ENCODE measurements at regions of chr10 and their contacts with region 1.

Region 1: DNA sequence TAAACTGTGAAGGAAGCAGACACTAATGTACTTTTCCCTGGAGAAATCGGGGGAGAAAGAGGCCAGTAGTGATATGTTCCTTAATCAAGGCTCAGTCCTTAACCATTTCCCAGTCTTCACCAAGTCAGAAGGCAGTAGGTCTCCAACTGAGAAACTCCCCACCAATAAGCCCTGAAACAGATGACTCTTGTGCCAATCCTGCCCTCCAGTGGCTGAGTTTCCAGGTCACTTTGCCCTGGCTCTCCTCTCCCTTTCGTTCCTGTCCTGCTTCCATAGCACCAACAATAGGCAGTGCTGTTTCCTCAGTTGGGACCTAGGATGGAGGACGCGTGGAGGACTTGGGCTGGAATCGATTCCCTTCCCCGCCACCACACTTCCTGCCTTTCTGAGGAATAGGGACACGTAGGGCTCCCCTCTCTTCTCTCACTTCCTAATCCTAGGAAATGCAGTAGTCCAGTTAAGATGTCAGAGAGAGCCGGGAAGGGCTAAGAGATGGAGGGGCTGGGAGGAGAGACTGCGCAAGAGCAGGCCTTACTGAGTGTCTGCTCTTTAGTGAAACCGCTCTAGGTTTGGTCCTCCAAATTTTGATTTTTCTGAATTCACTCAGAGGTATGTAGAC is 23.4 kb downstream of the ATOH7 start:
- DNase-seq: peak; percentile 23
- H3K4me3 Mint-ChIP-seq: no peak overlapping the region
- H3K27ac Mint-ChIP-seq: no peak overlapping the region
- H3K4me1 Mint-ChIP-seq: peaks cover 1% of the 10 kb centered on the region
- H3K27me3 Mint-ChIP-seq: peaks cover 8% of the 10 kb centered on the region

Region 2: GRCh38 chr10:68223535-68224165 is 15.1 kb after region 1 on chr10:
- CTCF ChIA-PET with region 1: interaction called, 11 read pairs
- POLR2A ChIA-PET with region 1: no interaction called
- DNase-seq: no peak
- H3K4me3 Mint-ChIP-seq: no peak overlapping the region
- H3K27ac Mint-ChIP-seq: no peak overlapping the region
- H3K4me1 Mint-ChIP-seq: no peaks in the 10 kb centered on the region
- H3K27me3 Mint-ChIP-seq: peaks cover 13% of the 10 kb centered on the region

Region 3: DNA sequence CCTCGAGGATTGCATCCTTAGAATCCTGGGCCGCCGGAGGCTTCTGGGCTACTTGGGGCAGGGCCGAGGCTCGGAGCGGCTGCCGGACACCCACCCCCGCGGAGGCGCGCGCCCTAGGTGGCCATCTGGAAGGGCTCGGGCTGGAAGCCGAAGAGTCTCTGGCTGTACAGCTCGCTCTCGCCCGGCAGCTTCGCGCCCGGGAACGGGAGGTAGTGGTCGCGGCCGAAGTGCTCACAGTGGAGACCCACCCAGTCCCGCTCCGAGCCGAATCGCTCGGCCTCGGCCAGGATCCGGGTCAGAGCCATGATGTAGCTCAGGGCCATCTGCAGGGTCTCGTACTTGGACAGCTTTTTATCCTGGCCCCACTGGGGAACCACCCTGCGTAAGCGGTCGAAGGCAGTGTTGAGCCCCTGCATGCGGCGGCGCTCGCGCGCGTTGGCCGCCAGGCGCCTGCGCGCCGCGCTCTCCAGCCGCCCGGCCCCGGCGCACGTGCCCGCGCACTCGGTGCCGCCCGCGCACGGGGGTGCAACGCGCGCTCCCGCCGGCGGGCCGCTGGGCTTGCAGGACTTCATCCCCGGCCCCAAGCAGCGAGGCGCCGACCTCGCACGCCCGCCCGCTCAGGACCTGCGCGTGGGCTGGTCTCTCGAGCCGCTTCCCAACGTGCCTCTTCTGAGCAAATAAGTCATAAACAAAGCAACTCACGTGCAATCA is 22.7 kb after region 1 on chr10:
- CTCF ChIA-PET with region 1: interaction called, 11 read pairs
- POLR2A ChIA-PET with region 1: no interaction called
- DNase-seq: peak; percentile 28
- H3K4me3 Mint-ChIP-seq: peak overlapping the region; percentile 62
- H3K27ac Mint-ChIP-seq: no peak overlapping the region
- H3K4me1 Mint-ChIP-seq: peaks cover 9% of the 10 kb centered on the region
- H3K27me3 Mint-ChIP-seq: peaks cover 44% of the 10 kb centered on the region

Region 4: DNA sequence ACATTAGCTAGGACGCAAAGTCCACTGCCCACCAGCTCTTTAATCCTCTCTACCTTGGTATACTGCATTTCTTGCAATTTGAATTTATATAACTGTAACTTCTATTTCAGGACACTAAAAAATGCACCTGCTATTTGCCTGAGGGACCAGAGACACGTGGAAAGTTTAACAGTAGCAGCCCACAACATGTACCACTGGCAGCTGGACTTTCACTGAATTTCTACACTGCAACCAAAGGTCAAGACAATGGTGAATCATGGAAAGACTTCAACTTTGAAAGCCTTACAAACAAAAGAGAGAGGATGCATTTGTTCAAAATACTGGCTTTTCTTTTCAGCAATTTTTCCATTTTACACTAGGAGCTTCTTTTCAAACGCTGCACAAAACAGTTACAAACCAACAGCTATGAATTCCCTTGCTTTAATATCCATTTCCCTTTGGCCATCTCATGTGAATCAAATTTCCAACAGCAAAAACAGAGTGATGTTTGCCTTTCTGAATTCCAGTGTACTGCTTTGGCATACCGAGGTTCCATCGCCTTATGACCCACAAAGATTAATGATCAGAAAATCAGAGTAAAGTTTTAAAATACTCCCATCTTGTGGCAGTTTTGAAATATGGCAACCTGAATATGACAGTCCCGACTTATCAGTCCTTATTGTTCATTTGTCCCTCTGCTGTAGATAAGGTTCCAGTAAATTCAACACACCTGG is 93.4 kb after region 1 on chr10:
- CTCF ChIA-PET with region 1: interaction called, 44 read pairs
- POLR2A ChIA-PET with region 1: no interaction called
- DNase-seq: no peak
- H3K4me3 Mint-ChIP-seq: no peak overlapping the region
- H3K27ac Mint-ChIP-seq: no peak overlapping the region
- H3K4me1 Mint-ChIP-seq: no peaks in the 10 kb centered on the region
- H3K27me3 Mint-ChIP-seq: no peaks in the 10 kb centered on the region

Region 5: DNA sequence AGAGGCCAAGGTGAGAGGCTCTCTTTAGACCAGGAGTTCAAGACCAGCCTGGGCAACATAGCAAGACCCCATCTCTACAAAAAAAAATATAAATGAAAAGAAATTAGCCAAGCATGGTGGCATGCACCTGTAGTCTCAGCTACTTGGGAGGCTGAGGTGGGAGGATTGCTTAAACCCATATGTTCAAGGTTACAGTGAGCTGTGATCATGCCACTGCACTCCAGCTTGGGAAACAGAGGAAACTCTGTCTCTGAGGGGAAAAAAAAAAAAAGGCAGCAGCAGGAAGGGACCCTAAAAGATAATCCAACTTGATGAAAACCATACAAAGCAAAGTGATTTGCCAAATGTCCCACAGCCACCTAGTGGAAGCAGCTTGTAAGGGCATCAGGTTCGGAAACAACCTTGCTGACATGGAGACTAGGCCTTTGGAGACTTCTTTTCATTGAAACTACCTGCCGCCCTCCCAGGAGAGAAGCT is 139.8 kb after region 1 on chr10:
- CTCF ChIA-PET with region 1: interaction called, 22 read pairs
- POLR2A ChIA-PET with region 1: no interaction called
- DNase-seq: peak; percentile 51
- H3K4me3 Mint-ChIP-seq: no peak overlapping the region
- H3K27ac Mint-ChIP-seq: no peak overlapping the region
- H3K4me1 Mint-ChIP-seq: peaks cover 17% of the 10 kb centered on the region
- H3K27me3 Mint-ChIP-seq: no peaks in the 10 kb centered on the region

Region 6: GRCh38 chr10:68700197-68700596 is 491.7 kb after region 1 on chr10:
- CTCF ChIA-PET with region 1: no interaction called
- POLR2A ChIA-PET with region 1: no interaction called
- DNase-seq: no peak
- H3K4me3 Mint-ChIP-seq: no peak overlapping the region
- H3K27ac Mint-ChIP-seq: no peak overlapping the region
- H3K4me1 Mint-ChIP-seq: no peaks in the 10 kb centered on the region
- H3K27me3 Mint-ChIP-seq: no peaks in the 10 kb centered on the region

Measured in activated CD4-positive, alpha-beta memory T cell treated with anti-CD3 and anti-CD28 coated beads, Interleukin-2, amount 10 ng/mL, durations not matched to agents 7 days and 5 days (primary cell).